ENCODE measurements at regions of chr3 and their contacts with region 1.

Region 1: DNA sequence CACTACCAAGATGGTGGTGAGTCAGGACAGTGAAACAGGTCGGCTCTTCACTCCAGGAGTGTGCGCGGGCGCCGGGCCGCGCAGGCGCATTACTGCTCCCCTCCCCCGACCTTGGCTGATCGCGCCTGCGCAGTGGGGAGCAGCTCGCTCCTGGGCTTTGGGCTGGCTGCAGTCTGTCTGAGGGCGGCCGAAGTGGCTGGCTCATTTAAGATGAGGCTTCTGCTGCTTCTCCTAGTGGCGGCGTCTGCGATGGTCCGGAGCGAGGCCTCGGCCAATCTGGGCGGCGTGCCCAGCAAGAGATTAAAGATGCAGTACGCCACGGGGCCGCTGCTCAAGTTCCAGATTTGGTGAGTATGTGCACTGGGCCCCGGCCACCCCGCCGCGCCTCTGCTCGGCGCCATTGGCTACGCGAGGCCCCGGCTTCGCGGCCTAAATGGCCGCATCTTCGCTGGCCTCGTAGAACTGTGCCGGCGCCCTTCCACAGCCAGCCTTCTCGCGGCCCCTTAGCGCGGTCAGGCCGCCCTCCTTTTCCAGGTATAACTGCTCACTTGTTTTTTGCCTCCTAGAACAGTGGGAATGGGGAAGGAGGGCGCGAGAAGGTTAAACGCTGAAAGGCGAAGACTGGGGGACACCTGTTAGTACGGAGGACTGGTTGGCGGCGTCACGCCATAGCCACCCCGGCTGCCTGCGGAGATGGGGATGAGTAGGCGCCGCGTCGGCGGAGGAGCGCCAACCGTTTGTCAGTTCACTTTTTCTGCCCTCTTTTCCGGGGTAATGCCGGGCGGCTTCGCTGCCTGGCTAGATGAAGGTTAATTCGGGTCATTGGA is at the start of gene SELENOT:
- DNase-seq: peak; percentile 95 to 99
- ATAC-seq: peak; percentile 76 to 94 (median 82)
- H3K4me3 ChIP-seq: peak within 1 kb of the TSS; percentile 85
- H3K4me3 Mint-ChIP-seq: peak within 1 kb of the TSS; percentile 98
- H3K27ac ChIP-seq: peak within 1 kb of the TSS; percentile 97
- H3K27ac Mint-ChIP-seq: peak within 1 kb of the TSS; percentile 98 to 99
- H3K4me1 ChIP-seq: peaks cover 34% of the 10 kb centered on the region
- H3K4me1 Mint-ChIP-seq: peaks cover 59 to 62% of the 10 kb centered on the region in 2 donors
- H3K27me3 ChIP-seq: no peaks in the 10 kb centered on the region
- H3K27me3 Mint-ChIP-seq: no peaks in the 10 kb centered on the region
- CTCF ChIP-seq: no peak
- total RNA-seq, gene SELENOT: 121 to 142 (median 133) TPM

Region 2: GRCh38 chr3:150408221-150409102 is 194.9 kb before region 1 on chr3 and contains the start of gene TSC22D2:
- intact Hi-C with region 1: loop called (anchors 2 kb)
- DNase-seq: peak; percentile 97 to 99
- ATAC-seq: peak; percentile 68 to 86 (median 77)
- H3K4me3 ChIP-seq: peak within 1 kb of the TSS; percentile 98
- H3K4me3 Mint-ChIP-seq: peak within 1 kb of the TSS; percentile 92
- H3K27ac ChIP-seq: peak within 1 kb of the TSS; percentile 99
- H3K27ac Mint-ChIP-seq: peak within 1 kb of the TSS; percentile 90 to 96
- H3K4me1 ChIP-seq: peaks cover 16% of the 10 kb centered on the region
- H3K4me1 Mint-ChIP-seq: peaks cover 48 to 49% of the 10 kb centered on the region in 2 donors
- H3K27me3 ChIP-seq: no peaks in the 10 kb centered on the region
- H3K27me3 Mint-ChIP-seq: no peaks in the 10 kb centered on the region
- CTCF ChIP-seq: no peak
- total RNA-seq, gene TSC22D2: 50.1 to 66.3 (median 63.0) TPM

Region 3: DNA sequence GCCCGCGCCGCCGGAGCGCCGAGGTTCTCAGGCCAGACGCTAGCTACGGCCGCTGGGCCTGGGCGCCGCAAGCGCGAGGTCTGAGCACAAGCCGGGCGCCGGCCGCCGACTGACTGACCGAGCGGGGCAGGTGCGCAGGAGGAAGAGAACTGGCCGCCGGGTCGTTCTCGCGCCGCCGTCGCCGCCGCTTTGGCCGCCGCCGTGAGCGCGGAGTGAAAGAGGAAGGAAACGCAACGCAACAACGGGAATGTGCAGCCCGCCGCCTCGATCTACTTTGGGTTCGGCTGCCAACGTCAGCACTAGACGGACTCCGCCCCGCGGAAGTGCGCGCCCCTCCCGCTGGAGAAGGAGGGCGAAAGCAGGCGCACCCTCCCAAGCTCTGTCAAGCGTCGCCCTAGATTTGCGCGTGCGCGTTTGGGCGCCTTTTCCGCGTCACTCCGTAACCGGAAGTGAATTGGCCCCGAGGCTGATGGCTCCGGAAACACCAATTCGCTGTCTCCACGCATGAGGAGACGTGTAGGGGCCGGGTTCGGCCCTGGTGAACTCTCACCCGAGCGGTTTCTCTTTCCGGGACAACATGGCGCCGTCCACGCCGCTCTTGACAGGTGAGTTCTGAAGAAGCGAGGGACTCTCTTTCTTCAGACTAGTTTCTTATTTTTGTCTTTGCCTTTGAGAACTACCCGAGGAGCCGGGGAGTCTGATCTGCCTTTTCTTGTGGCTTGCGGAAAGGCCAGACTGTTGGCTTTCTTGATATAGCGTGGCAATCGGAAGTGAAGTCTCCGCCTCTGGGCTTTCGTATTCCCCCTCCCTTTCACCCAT is 56.9 kb before region 1 on chr3 and contains the starts of genes EIF2A and SERP1:
- intact Hi-C with region 1: loop called (anchors 1 kb)
- DNase-seq: peak; percentile 99 to 100
- ATAC-seq: peak; percentile 87 to 97 (median 88)
- H3K4me3 ChIP-seq: peak within 1 kb of the TSS; percentile 61
- H3K4me3 Mint-ChIP-seq: peak within 1 kb of the TSS; percentile 96
- H3K27ac ChIP-seq: peak within 1 kb of the TSS; percentile 87
- H3K27ac Mint-ChIP-seq: peak within 1 kb of the TSS; percentile 97
- H3K4me1 ChIP-seq: peaks cover 6% of the 10 kb centered on the region
- H3K4me1 Mint-ChIP-seq: peaks cover 61 to 69% of the 10 kb centered on the region in 2 donors
- H3K27me3 ChIP-seq: no peaks in the 10 kb centered on the region
- H3K27me3 Mint-ChIP-seq: no peaks in the 10 kb centered on the region
- CTCF ChIP-seq: no peak
- total RNA-seq, gene EIF2A: 102 to 124 (median 108) TPM
- total RNA-seq, gene SERP1: 91.1 to 106 (median 94.9) TPM

Region 4: DNA sequence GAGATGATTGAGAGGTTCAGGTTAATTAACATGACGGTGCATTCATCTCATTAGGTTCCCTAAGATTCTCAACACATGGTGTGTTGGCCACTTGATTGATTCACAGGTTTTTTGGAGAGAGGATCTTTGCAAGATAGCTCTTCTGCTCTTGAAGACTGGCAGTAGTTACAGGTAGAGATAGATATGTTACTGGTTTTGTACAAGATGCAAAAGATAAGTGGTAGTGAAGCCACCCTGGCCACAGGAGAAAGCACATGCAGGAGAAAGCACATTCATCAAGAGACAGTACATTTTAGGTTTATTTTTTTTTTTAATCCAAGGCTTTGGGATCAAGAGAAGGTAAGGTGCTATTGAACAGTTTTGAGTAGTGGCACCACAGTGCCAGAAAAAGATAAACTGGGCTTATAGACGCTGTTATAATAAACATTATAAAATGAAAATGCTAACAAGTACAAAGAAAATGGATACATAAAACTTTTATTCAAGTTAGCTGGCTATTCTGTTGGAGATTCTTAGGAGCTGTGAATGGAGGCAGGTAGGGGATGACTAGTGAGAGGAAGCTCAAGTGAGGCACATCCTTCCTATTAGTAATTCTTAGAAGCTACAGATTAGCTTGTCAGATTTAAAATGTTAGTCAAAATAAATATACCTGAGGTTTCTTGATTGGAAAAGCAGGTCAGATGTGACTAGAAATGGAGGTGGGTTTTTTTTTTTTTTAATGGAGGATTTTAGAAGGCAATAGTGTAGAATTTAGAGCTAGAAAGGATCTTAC is 10.5 kb after region 1 on chr3:
- intact Hi-C with region 1: no loop called
- DNase-seq: no peak
- ATAC-seq: no peak
- H3K4me3 ChIP-seq: no peak overlapping the region
- H3K4me3 Mint-ChIP-seq: peak overlapping the region; percentile 13
- H3K27ac ChIP-seq: no peak overlapping the region
- H3K27ac Mint-ChIP-seq: peak overlapping the region; percentile 1 to 79
- H3K4me1 ChIP-seq: peaks cover 15% of the 10 kb centered on the region
- H3K4me1 Mint-ChIP-seq: peaks cover 58 to 65% of the 10 kb centered on the region in 2 donors
- H3K27me3 ChIP-seq: no peaks in the 10 kb centered on the region
- H3K27me3 Mint-ChIP-seq: no peaks in the 10 kb centered on the region
- CTCF ChIP-seq: no peak

Region 5: DNA sequence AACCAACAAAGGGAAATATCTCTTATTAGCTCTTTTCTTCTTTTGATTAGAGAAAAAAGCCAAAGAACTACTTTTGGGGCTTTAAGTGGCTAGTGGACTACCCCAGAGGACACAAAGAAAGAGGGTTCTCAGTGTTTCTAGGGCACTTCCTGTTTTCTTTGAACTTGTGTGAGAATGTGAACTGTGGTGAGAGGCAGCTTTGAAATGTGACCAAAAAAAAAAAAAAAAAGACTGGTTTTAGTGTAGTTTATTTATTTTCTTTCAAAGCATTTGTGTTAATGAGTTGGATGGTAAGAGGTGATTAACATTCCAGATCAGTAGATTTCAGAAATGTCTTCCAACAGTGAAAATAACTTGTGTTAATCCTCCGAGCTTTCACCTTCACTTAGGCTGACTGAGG is 32.2 kb after region 1 on chr3:
- intact Hi-C with region 1: loop called (anchors 1 kb)
- DNase-seq: peak in 1 of 2 donors; percentile 64
- ATAC-seq: peak; percentile 92 to 95 (median 93)
- H3K4me3 ChIP-seq: no peak overlapping the region
- H3K4me3 Mint-ChIP-seq: peak overlapping the region; percentile 80
- H3K27ac ChIP-seq: peak overlapping the region; percentile 77
- H3K27ac Mint-ChIP-seq: peak overlapping the region; percentile 91 to 98
- H3K4me1 ChIP-seq: peaks cover 28% of the 10 kb centered on the region
- H3K4me1 Mint-ChIP-seq: peaks cover 44 to 45% of the 10 kb centered on the region in 2 donors
- H3K27me3 ChIP-seq: no peaks in the 10 kb centered on the region
- H3K27me3 Mint-ChIP-seq: no peaks in the 10 kb centered on the region
- CTCF ChIP-seq: no peak

Region 6: GRCh38 chr3:150703299-150704134 is 100.2 kb after region 1 on chr3 and contains the start of gene ERICH6:
- intact Hi-C with region 1: loop called (anchors 1 kb)
- DNase-seq: peak; percentile 84 to 86
- ATAC-seq: peak; percentile 90 to 97 (median 91)
- H3K4me3 ChIP-seq: peak within 1 kb of the TSS; percentile 84
- H3K4me3 Mint-ChIP-seq: peak within 1 kb of the TSS; percentile 99
- H3K27ac ChIP-seq: peak within 1 kb of the TSS; percentile 96
- H3K27ac Mint-ChIP-seq: peak within 1 kb of the TSS; percentile 99 to 100
- H3K4me1 ChIP-seq: peaks cover 27% of the 10 kb centered on the region
- H3K4me1 Mint-ChIP-seq: peaks cover 25 to 34% of the 10 kb centered on the region in 2 donors
- H3K27me3 ChIP-seq: no peaks in the 10 kb centered on the region
- H3K27me3 Mint-ChIP-seq: no peaks in the 10 kb centered on the region
- CTCF ChIP-seq: no peak
- total RNA-seq, gene ERICH6: 0.35 to 3.7 (median 3.6) TPM

Region 7: DNA sequence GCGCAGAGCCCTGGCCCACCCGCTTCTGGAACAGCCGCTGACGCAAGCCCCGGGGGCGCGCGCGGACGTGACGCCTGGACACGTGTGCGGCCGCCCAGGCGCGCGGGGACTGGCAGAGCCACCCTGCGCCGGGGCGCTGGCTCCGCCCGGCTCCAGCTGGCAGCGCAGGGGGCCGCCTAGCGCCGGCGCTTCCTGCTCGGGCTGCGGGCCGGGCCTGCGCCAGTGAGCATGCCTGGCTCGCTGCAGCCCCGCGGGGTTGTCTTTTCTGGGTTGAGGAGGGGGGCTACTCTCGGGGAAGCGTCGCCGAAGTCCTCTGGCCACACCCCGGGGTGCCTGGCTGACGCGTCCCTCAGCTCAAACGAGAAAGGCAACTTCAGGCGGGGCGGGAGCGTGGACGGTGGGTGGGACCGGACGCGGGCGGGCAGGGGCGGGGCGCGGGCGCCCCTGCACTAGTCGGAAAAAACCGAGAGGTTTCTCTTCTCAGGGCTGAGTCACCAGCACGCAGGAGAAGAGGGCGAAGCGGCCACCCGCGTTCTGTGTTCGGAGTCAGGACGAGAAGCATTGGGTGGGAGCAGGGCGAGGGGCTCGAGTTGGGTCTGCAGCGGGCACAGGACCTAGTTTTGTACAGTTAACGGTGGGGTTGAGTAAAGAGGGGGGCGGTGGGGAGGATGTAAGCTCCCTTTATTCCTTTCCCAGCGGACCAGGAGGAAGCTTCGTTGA is 159.9 kb after region 1 on chr3 and contains the start of gene SIAH2:
- intact Hi-C with region 1: loop called (anchors 2 kb)
- DNase-seq: peak; percentile 94 to 97
- ATAC-seq: peak; percentile 76 to 93 (median 81)
- H3K4me3 ChIP-seq: peak within 1 kb of the TSS; percentile 81
- H3K4me3 Mint-ChIP-seq: peak within 1 kb of the TSS; percentile 96
- H3K27ac ChIP-seq: peak within 1 kb of the TSS; percentile 99
- H3K27ac Mint-ChIP-seq: peak within 1 kb of the TSS; percentile 98 to 100
- H3K4me1 ChIP-seq: peaks cover 13% of the 10 kb centered on the region
- H3K4me1 Mint-ChIP-seq: peaks cover 43 to 46% of the 10 kb centered on the region in 2 donors
- H3K27me3 ChIP-seq: no peaks in the 10 kb centered on the region
- H3K27me3 Mint-ChIP-seq: no peaks in the 10 kb centered on the region
- CTCF ChIP-seq: no peak
- total RNA-seq, gene SIAH2: 22.7 to 25.7 (median 23.8) TPM

Measured in natural killer cell (primary cell).